Ovary (tissue), 10 donors: ENCODE measurements at regions of chr11 and their contacts with region 1.

Region 1: DNA sequence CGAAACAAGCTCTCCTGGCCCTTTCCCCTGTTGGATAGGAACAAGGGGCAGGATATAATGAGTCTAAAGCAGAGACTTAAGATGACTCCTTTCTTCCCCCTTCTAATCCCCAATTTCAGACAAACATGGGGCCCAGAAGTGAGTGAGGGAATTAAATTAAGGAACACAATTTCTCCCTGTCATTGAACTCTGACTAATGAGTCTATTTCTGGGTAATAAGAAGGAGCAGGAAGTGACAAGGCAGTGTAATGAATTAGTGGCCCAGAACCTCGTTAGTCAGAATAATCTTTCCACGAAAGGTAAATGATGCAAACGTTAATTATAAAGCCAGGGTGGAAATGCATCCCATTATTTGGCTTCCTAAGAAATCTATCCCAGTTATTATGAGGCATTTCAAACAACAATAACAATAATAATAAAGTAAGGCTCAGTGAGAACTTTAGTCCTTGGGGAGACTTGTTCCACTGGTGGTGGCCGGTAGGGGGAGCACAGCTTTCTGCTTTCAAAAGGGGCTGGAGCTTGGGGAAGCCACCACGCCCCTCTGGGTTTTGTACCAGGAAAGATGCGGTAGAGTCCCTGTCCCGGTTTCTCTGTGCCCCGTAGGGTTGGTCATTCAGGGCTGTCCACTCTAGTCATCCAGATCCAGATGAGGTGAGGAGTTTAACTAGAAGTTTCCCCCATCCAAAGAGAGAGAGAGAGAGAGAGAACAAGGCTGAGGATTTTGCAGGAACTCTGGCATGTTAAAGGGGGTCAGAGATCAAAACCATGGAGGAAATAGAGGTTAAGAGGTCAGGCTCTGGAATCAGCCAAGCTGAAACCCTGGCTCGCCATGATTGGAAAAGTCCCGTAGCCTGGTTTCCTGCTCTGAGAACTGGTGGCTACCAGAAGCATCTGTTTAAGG is 298.3 kb downstream of the NTM start:
- DNase-seq: no peak
- H3K4me3 ChIP-seq: no peak overlapping the region
- H3K27ac ChIP-seq: no peak overlapping the region
- H3K4me1 ChIP-seq: no peaks in the 10 kb centered on the region
- H3K27me3 ChIP-seq: no peaks in the 10 kb centered on the region
- CTCF ChIP-seq: no peak
- EP300 ChIP-seq: no peak
- POLR2A ChIP-seq: no peak

Region 2: DNA sequence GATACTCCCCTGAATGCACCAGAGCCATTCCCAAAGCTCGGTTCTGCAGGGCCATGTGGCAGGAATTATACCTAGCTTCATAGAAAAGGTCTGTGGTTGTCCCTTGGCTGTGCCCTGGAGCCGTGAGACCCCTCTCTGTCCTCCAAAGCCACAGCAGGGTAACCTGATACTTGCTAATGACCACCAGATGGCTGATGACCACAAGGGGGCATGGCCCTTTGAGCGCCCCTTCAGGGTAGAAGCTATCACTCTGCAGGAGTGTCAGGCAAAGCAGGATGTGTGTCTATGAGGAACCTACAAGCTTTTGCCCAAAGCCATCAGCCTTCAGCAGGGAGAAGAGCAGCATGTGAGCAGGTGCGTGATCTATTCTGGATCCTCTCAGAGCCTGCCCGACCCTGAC is 203.0 kb before region 1 on chr11:
- intact Hi-C with region 1: loop called in 1 of 4 experiments (anchors 10 kb)
- DNase-seq: no peak
- H3K4me3 ChIP-seq: no peak overlapping the region
- H3K27ac ChIP-seq: no peak overlapping the region
- H3K4me1 ChIP-seq: no peaks in the 10 kb centered on the region
- H3K27me3 ChIP-seq: no peaks in the 10 kb centered on the region
- CTCF ChIP-seq: no peak
- EP300 ChIP-seq: no peak
- POLR2A ChIP-seq: no peak

Region 3: DNA sequence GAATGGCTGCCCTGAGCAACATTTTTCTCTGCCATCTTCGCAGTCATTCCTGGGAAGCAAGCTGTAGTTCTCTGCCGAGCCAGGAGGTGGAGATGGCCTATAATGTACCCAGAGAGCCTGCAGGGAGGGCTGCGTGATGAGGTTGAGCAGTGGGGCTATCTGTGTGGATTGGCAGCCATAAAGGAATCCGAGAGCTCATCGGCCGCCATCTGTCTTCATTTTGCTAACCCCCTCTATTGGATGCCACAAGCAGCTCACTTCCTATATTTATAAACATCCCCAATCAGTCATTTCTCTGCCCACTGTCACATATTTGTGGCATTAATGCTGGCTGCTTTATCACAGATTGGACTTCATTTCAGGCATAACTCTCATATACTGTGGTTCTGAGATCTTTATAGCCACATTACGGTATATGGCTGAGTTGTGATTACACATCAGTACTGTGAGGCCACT is 88.8 kb before region 1 on chr11:
- intact Hi-C with region 1: loop called in 1 of 4 experiments (anchors 10 kb)
- DNase-seq: peak in 1 of 5 donors; percentile 56
- H3K4me3 ChIP-seq: no peak overlapping the region
- H3K27ac ChIP-seq: no peak overlapping the region
- H3K4me1 ChIP-seq: no peaks in the 10 kb centered on the region
- H3K27me3 ChIP-seq: no peaks in the 10 kb centered on the region
- CTCF ChIP-seq: peak in 1 of 3 donors; percentile 19
- EP300 ChIP-seq: no peak
- POLR2A ChIP-seq: no peak